Activated CD8-positive, alpha-beta T cell treated with anti-CD3 and anti-CD28 coated beads for 36 hours (primary cell): ENCODE measurements at regions of chr2 and their contacts with region 1.

Region 1: DNA sequence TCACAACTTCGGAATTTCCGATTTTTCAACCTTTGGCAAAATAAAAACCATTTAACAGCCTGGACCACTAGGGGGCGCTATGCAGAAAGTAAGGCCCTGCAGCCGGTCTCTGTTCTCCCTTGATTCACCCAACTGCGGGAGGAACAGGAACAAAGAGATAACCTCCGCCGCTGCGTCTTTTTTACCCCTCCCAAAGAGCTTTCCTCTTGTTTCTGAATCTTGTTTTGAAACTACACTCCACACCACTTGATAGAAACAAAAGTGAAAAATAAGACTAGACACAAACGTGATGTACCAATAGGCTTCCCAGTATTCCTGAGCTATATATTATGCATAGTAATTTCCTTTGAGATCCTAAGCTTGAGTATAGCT is 231.2 kb downstream of the MYO3B start:
- DNase-seq: peak; percentile 87
- ATAC-seq: peak; percentile 75
- H3K4me3 Mint-ChIP-seq: peak overlapping the region; percentile 39
- H3K27ac Mint-ChIP-seq: no peak overlapping the region
- H3K4me1 Mint-ChIP-seq: peaks cover 4% of the 10 kb centered on the region
- H3K27me3 Mint-ChIP-seq: peaks cover 20% of the 10 kb centered on the region
- CTCF ChIP-seq: peak; percentile 90

Region 2: DNA sequence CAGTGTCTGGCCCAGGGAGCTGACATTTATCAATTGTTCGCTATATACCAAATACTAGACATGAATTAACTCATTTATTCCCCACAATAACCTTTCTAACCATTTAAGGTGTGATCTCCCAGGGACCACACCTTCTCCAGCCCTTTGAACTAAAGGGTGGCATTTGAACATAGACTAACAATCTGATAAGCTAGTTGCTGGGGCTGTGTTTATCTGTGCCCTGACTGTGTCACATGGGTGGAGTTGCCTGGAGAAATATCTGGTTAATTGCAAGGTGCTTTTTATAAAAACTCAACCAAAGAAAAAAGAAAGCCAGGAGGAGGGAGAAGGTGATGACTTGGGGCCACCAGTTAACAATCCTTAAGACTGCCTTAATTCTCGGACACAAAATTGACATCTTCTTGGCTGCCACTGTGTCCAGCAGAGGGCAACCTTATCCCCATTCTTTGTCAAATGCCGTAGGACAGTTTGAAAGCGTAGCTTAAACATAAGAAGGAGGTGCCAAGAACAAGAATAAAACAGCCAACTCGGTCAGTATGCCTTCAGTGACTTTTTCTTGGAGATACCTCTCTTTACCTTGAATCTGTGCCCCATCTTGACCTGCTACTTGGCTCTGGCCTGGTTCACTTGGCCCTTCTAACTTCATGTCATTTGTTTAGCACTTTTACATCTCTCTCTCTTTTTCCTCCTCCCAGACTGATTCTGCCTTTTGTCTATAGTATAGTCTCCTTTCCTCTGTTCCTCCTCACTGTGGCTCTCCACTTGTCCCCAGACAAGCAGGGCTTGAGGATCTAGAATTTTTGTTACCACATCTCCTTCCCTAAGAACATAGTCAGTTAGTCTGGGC is 47.8 kb before region 1 on chr2:
- CTCF ChIA-PET with region 1: interaction called, 13 read pairs
- POLR2A ChIA-PET with region 1: no interaction called
- intact Hi-C with region 1: no loop called
- DNase-seq: peak; percentile 77
- ATAC-seq: peak; percentile 59
- H3K4me3 Mint-ChIP-seq: peak overlapping the region; percentile 20
- H3K27ac Mint-ChIP-seq: peak overlapping the region; percentile 53
- H3K4me1 Mint-ChIP-seq: peaks cover 25% of the 10 kb centered on the region
- H3K27me3 Mint-ChIP-seq: peaks cover 13% of the 10 kb centered on the region
- CTCF ChIP-seq: peak; percentile 66

Region 3: GRCh38 chr2:170391018-170391417 is 18.1 kb before region 1 on chr2:
- CTCF ChIA-PET with region 1: interaction called, 17 read pairs
- POLR2A ChIA-PET with region 1: no interaction called
- intact Hi-C with region 1: no loop called
- DNase-seq: no peak
- ATAC-seq: no peak
- H3K4me3 Mint-ChIP-seq: no peak overlapping the region
- H3K27ac Mint-ChIP-seq: no peak overlapping the region
- H3K4me1 Mint-ChIP-seq: no peaks in the 10 kb centered on the region
- H3K27me3 Mint-ChIP-seq: peaks cover 27% of the 10 kb centered on the region
- CTCF ChIP-seq: no peak

Region 4: GRCh38 chr2:170425281-170425751 is 16.2 kb after region 1 on chr2:
- CTCF ChIA-PET with region 1: interaction called, 33 read pairs
- POLR2A ChIA-PET with region 1: no interaction called
- intact Hi-C with region 1: no loop called
- DNase-seq: no peak
- ATAC-seq: no peak
- H3K4me3 Mint-ChIP-seq: no peak overlapping the region
- H3K27ac Mint-ChIP-seq: no peak overlapping the region
- H3K4me1 Mint-ChIP-seq: no peaks in the 10 kb centered on the region
- H3K27me3 Mint-ChIP-seq: peaks cover 11% of the 10 kb centered on the region
- CTCF ChIP-seq: no peak

Region 5: DNA sequence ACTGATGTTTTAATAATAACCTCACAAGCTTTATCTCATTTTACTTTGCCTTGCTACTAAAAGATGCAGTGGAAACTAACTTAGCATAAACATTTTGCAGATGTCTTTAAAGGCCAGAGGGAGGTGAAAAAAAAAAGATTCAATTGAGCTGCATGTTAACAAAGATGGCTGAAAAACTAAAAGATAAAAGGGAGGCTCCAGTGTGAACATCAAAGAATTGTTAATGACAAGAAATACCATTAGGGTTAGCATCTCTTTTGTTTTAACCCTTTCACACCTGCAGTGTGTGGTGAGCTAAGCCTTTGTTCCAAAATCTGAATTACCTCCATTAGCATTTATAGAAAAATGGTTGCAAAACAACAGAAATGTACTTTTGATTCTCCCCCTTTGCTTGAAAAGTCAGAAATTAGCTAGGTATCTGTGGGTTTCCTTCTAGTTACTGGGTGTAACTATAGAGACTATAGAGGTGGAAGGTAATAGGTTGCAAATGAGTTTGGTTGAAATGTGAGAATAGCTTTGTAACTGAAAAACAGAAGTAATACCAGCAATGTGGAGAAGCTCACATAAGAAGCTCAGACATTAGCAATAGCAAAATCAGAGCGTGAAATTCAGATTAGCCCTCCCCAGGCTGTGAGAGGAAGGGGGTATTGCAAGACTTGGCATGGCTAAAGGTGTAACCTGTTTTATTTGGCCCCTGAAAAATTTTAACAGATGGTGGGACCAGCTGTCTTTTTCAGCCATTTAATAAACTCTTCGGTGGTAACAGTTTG is 271.2 kb after region 1 on chr2:
- CTCF ChIA-PET with region 1: interaction called, 11 read pairs
- POLR2A ChIA-PET with region 1: no interaction called
- intact Hi-C with region 1: no loop called
- DNase-seq: no peak
- ATAC-seq: no peak
- H3K4me3 Mint-ChIP-seq: no peak overlapping the region
- H3K27ac Mint-ChIP-seq: no peak overlapping the region
- H3K4me1 Mint-ChIP-seq: no peaks in the 10 kb centered on the region
- H3K27me3 Mint-ChIP-seq: peaks cover 1% of the 10 kb centered on the region
- CTCF ChIP-seq: no peak